Posterior cingulate gyrus (tissue), 11 donors: ENCODE measurements at regions of chr10 and their contacts with region 1.

Region 1: GRCh38 chr10:119431768-119432135 is 110.8 kb downstream of the RGS10 start:
- DNase-seq: no peak

Region 2: DNA sequence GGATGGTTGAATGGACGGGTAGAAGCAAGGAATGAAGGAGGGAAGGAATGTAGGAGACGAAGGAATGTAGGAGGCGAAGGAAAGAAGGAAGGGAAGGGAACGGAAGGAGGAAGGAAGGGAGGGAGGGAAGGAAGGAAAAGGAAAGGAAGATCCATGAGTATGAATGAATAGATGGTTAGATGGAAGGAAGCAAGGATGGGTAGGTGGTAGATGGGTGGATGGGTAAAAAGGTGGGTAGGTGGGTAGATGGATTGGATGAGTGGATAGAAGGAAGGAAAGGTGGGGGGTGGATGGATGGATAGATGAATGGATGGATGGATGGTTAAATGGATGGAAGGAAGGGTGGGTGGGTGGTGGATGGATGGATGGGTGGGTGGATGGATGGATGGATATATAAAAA is 33.3 kb after region 1 on chr10:
- intact Hi-C with region 1: loop called (anchors 2 kb)
- DNase-seq: no peak

Region 3: DNA sequence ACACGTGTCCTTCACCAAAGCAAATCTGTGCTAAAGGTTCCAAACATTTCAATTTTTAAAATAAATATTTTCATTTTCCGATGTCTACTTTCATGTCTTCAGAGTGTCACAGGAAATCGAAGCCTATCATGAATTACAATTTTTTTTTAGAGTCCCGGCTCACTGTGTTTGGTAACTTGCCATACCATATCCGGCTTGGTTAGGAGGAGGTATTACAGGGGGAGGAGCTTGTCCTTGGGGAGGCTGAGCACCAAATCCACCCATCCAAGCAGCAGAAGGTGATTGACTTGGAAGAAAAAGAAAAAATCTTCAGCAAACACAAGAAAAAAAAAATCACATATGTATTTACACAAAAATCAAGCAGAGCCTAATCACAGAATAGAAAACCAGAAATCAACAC is 143.8 kb after region 1 on chr10:
- intact Hi-C with region 1: no loop called
- DNase-seq: no peak